ENCODE measurements at regions of chr10 and their contacts with region 1.

Region 1: DNA sequence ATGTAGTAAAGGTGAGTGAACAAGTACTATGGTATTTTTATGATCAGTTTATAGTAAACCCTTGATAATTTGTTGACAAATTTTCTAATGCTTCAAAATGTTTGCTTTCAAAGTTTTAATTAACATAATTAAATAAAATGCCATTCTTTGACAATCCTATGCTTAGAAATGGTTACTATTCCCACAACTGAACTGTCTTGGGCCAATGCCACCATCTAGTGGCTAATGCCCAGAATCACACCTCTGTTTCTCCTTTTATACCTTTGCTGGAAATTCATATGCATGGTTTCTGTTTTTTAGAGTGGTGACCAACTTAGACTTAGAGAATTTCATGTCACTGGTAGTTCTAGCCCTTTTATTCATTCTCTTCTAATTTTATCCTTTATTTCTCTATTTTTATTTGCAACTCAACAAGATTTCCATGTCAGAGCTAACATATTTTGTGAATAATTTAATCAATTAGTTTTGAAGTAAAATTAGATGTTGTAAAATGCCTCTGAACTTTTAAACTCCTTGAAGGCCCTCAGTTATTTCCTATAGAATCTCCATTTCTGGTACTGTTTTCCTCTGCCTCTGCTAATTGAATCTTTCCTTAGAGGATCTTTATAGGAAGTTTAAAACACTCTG is 31.1 kb downstream of the PCGF5 start:
- DNase-seq: peak in 4 of 5 donors; percentile 35 to 85 (median 57)
- H3K4me3 ChIP-seq: no peak overlapping the region
- H3K27ac ChIP-seq: no peak overlapping the region
- H3K4me1 ChIP-seq: no peaks in the 10 kb centered on the region
- H3K27me3 ChIP-seq: no peaks in the 10 kb centered on the region
- CTCF ChIP-seq: peak; percentile 89

Region 2: GRCh38 chr10:90912174-90912573 is 339.4 kb before region 1 on chr10:
- intact Hi-C with region 1: loop called (anchors 5 kb)
- DNase-seq: no peak
- H3K4me3 ChIP-seq: no peak overlapping the region
- H3K27ac ChIP-seq: no peak overlapping the region
- H3K4me1 ChIP-seq: peaks cover 0 to 2% (median 0%) of the 10 kb centered on the region in 3 donors
- H3K27me3 ChIP-seq: no peaks in the 10 kb centered on the region
- CTCF ChIP-seq: no peak